ENCODE measurements at regions of chr7 and their contacts with region 1.

Region 1: GRCh38 chr7:152336754-152337368 is 98.9 kb downstream of the KMT2C start:
- DNase-seq: peak; percentile 53
- H3K4me3 Mint-ChIP-seq: no peak overlapping the region
- H3K27ac Mint-ChIP-seq: no peak overlapping the region
- H3K4me1 Mint-ChIP-seq: no peaks in the 10 kb centered on the region
- H3K27me3 Mint-ChIP-seq: no peaks in the 10 kb centered on the region
- CTCF ChIP-seq: peak; percentile 53

Region 2: GRCh38 chr7:152436111-152436930 is 99.5 kb after region 1 on chr7:
- CTCF ChIA-PET with region 1: interaction called, 3 read pairs
- intact Hi-C with region 1: loop called (anchors 2 kb)
- DNase-seq: peak; percentile 94
- H3K4me3 Mint-ChIP-seq: peak overlapping the region; percentile 85
- H3K27ac Mint-ChIP-seq: peak overlapping the region; percentile 70
- H3K4me1 Mint-ChIP-seq: peaks cover 16% of the 10 kb centered on the region
- H3K27me3 Mint-ChIP-seq: no peaks in the 10 kb centered on the region
- CTCF ChIP-seq: no peak

Region 3: GRCh38 chr7:152574892-152575640 is 238.2 kb after region 1 on chr7:
- CTCF ChIA-PET with region 1: interaction called, 7 read pairs
- intact Hi-C with region 1: loop called (anchors 10 kb)
- DNase-seq: no peak
- H3K4me3 Mint-ChIP-seq: no peak overlapping the region
- H3K27ac Mint-ChIP-seq: no peak overlapping the region
- H3K4me1 Mint-ChIP-seq: no peaks in the 10 kb centered on the region
- H3K27me3 Mint-ChIP-seq: no peaks in the 10 kb centered on the region
- CTCF ChIP-seq: no peak

Region 4: DNA sequence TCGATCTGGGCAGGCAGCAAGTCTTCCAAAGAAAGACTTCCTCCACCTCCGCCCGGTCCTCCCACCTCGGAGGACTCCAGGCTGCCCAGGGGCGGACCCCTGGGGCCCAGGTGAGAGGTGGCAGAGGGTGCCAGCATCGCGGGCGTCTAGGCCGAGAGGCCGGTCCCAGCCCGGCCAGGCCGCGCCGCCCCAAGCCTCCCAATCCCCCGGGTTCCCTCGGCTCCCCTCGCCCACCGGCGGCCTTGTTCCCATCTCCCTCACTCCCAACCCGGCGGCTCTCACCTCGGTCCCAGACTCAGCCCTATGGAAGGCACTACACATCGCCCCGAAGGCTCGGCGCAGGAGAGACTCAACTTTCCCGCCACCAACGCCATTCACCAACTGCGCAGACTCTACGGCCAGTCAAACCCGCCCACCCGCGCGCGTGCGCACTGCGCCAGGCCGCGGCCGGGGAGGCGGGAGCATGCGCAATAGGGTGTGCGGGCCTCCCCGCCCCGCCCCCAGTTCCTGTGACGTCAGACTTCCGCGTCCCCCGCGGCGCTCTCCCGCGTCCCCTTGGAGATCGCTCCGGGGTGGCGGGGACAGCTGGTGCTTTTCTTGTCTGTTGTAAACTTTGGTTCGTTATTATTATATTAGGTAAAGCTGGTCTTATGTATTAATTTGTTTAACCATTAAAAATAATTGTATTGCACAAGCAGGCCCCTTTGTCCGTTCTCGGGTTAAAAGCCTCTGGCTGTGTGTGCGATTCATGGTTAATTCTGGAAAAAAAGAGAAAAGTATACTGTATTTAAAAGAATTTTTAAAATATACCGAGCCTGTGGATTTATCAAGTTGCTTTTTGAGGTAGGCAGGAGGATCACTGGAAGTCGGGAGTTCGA is 339.1 kb after region 1 on chr7 and contains the start of gene XRCC2:
- CTCF ChIA-PET with region 1: no interaction called
- intact Hi-C with region 1: loop called (anchors 10 kb)
- DNase-seq: peak; percentile 94
- H3K4me3 Mint-ChIP-seq: peak within 1 kb of the TSS; percentile 97
- H3K27ac Mint-ChIP-seq: peak within 1 kb of the TSS; percentile 91
- H3K4me1 Mint-ChIP-seq: peaks cover 9% of the 10 kb centered on the region
- H3K27me3 Mint-ChIP-seq: no peaks in the 10 kb centered on the region
- CTCF ChIP-seq: no peak
- total RNA-seq, gene XRCC2: 22.1 and 23.1 TPM in 2 replicates

Region 5: DNA sequence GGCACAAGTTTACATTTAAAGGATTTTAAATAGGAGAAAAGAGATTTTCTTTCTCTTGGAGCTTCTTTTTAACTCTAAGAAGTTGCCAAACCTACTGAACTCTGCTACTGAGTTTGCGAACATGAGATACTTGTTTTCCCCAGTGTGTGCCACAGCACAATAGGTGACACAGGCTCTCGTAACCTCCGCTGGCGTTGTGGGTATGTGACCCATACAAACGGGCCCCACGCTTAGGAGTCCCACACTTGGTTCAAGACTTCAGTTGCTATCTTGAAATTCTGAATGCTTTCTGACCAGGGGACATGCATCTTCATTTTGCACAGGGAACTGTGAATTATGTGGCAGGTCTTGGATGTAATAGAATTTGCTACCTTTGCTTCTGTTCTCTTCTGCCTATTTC is 370.9 kb after region 1 on chr7:
- CTCF ChIA-PET with region 1: interaction called, 6 read pairs
- intact Hi-C with region 1: loop called (anchors 1 kb)
- DNase-seq: no peak
- H3K4me3 Mint-ChIP-seq: no peak overlapping the region
- H3K27ac Mint-ChIP-seq: no peak overlapping the region
- H3K4me1 Mint-ChIP-seq: no peaks in the 10 kb centered on the region
- H3K27me3 Mint-ChIP-seq: no peaks in the 10 kb centered on the region
- CTCF ChIP-seq: no peak

Region 6: DNA sequence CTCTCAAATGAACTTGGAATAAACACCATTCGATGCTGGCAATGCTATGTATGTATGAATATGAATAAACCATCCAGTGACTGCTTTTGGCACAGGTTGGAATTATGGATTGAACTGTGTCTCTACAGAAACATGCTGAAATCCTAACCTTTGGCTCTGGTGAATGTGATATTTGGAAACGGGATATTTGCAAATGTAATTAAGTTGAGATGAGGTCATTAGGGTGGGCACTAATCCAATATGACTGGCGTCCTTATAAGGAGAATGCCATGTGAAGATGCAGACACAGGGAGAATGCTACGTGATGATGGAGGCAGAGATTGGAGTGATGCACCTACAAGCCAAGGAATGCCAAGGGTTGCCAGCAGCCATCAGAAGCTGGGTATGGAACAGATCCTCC is 419.3 kb after region 1 on chr7:
- CTCF ChIA-PET with region 1: no interaction called
- intact Hi-C with region 1: no loop called
- DNase-seq: no peak
- H3K4me3 Mint-ChIP-seq: no peak overlapping the region
- H3K27ac Mint-ChIP-seq: no peak overlapping the region
- H3K4me1 Mint-ChIP-seq: peaks cover 5% of the 10 kb centered on the region
- H3K27me3 Mint-ChIP-seq: peaks cover 12% of the 10 kb centered on the region
- CTCF ChIP-seq: no peak